ENCODE measurements at regions of chr19 and their contacts with region 1.

Region 1: GRCh38 chr19:39341719-39342604 is at the start of gene SAMD4B:
- DNase-seq: peak; percentile 99
- ATAC-seq: peak; percentile 96
- H3K4me3 Mint-ChIP-seq: peak within 1 kb of the TSS; percentile 94
- H3K27ac Mint-ChIP-seq: peak within 1 kb of the TSS; percentile 87
- H3K4me1 Mint-ChIP-seq: peaks cover 24% of the 10 kb centered on the region
- H3K27me3 Mint-ChIP-seq: peaks cover 13% of the 10 kb centered on the region
- CTCF ChIP-seq: peak; percentile 41
- total RNA-seq, gene SAMD4B: 148 to 164 TPM (median 150 TPM) in 3 replicates

Region 2: GRCh38 chr19:39156326-39157230 is 185.4 kb before region 1 on chr19:
- CTCF ChIA-PET with region 1: interaction called, 12 read pairs
- POLR2A ChIA-PET with region 1: no interaction called
- DNase-seq: no peak
- ATAC-seq: no peak
- H3K4me3 Mint-ChIP-seq: no peak overlapping the region
- H3K27ac Mint-ChIP-seq: no peak overlapping the region
- H3K4me1 Mint-ChIP-seq: peaks cover 40% of the 10 kb centered on the region
- H3K27me3 Mint-ChIP-seq: no peaks in the 10 kb centered on the region; the same call in 1 of the 2 replicates
- CTCF ChIP-seq: no peak

Region 3: DNA sequence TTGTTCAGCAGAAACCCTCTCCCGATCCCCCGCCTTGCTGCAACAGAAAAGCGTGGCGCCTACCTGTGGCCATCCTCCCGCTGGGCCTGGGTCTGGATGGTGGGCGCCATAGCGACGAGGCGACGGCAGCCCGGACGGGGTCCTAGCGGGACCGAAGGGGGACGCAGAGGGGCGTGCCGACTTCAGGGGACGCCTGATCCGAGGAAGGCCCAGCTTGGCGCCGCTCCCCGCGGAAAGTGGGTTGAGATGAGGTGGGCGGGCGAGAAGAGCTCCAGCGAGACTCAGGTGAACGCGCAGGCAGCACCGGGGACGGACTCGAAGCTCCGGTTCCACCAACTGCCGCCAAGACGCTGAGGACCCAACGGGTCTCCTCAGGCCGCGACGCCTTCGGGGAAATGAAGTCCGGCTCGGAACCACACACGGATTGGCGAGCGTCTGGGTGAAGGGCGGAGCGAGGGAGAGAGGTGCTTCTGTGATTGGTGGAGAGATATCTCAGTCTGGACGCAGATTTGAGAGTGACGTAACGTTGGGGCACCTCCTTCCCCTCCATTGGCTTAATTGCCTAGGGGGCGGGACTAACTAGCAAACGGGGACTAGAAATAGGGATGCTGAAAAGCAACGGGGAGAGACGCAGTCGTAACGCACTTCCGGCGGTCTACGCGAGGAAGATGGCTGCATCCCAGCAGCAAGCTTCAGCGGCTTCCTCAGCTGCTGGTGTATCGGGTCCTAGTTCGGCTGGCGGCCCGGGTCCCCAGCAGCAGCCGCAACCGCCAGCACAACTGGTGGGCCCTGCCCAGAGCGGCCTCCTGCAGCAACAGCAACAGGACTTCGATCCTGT is 49.0 kb after region 1 on chr19 and contains the starts of genes MED29 and PAF1:
- CTCF ChIA-PET with region 1: interaction called, 13 read pairs
- POLR2A ChIA-PET with region 1: interaction called, 4 read pairs
- DNase-seq: peak; percentile 96
- ATAC-seq: peak; percentile 96
- H3K4me3 Mint-ChIP-seq: peak within 1 kb of the TSS; percentile 100
- H3K27ac Mint-ChIP-seq: peak within 1 kb of the TSS; percentile 99
- H3K4me1 Mint-ChIP-seq: peaks cover 14% of the 10 kb centered on the region
- H3K27me3 Mint-ChIP-seq: no peaks in the 10 kb centered on the region; the same call in 1 of the 2 replicates
- CTCF ChIP-seq: no peak
- total RNA-seq, gene MED29: 37.6 to 42.9 TPM (median 39.4 TPM) in 3 replicates
- total RNA-seq, gene PAF1: 27.8 to 34.4 TPM (median 29.4 TPM) in 3 replicates

Region 4: GRCh38 chr19:39474139-39474622 is 132.2 kb after region 1 on chr19:
- CTCF ChIA-PET with region 1: no interaction called
- POLR2A ChIA-PET with region 1: no interaction called
- DNase-seq: peak; percentile 90
- ATAC-seq: peak; percentile 90
- H3K4me3 Mint-ChIP-seq: no peak overlapping the region
- H3K27ac Mint-ChIP-seq: peak overlapping the region; percentile 56; the same call in 1 of the 2 replicates
- H3K4me1 Mint-ChIP-seq: peaks cover 3% of the 10 kb centered on the region; the same call in 1 of the 2 replicates
- H3K27me3 Mint-ChIP-seq: no peaks in the 10 kb centered on the region
- CTCF ChIP-seq: peak; percentile 93